Activated naive CD8-positive, alpha-beta T cell treated with anti-CD3 and anti-CD28 coated beads, Interleukin-2, amount 10 ng/mL, durations not matched to agents 7 days and 5 days (primary cell): ENCODE measurements at regions of chr20 and their contacts with region 1.

Region 1: DNA sequence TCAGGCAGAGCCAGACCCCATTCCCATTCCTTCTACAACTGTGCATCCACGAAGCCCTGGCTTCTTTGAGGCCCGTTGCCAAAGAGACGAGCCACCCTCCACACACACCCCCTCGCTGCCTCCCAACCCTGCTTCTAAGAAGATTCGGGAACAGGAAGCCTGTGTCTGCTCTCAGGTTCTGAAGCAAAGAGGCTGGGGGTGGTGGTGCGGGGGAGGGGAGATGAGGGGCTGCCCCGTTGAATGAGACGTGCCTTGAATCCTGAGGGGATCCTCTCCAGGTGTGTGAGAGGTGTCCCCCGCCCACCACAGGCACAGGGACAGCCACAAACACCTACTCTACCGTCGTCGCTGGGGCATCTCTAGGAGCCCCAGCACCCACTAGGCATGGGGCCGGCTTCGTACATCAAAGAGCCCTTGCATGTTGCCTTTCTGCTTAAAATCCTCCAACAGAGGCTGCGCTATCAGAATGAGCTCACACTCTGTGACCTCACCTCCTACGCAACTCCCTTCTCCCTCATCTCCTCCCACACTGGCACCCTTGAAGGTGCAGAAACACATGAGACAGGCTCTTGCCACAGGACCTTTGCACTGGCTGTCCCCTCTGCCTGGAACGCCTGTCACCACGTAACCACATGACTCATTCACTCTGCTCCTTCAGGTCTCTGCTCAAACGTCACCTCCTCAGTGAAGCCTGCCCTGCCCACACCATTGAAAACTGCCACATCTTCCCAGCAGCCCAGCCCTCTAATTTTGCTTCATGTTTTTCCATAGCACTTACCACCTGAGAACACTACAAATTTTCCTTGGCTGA is 58.5 kb downstream of the PREX1 start:
- DNase-seq: peak; percentile 77
- ATAC-seq: peak; percentile 89
- H3K4me3 Mint-ChIP-seq: peak overlapping the region; percentile 66
- H3K27ac Mint-ChIP-seq: peak overlapping the region; percentile 95
- H3K4me1 Mint-ChIP-seq: peaks cover 77% of the 10 kb centered on the region
- H3K27me3 Mint-ChIP-seq: no peaks in the 10 kb centered on the region

Region 2: GRCh38 chr20:48750947-48751635 is 18.2 kb before region 1 on chr20:
- POLR2A ChIA-PET with region 1: interaction called, 10 read pairs
- DNase-seq: peak; percentile 60
- ATAC-seq: peak; percentile 87
- H3K4me3 Mint-ChIP-seq: peak overlapping the region; percentile 75
- H3K27ac Mint-ChIP-seq: peak overlapping the region; percentile 91
- H3K4me1 Mint-ChIP-seq: peaks cover 60% of the 10 kb centered on the region
- H3K27me3 Mint-ChIP-seq: no peaks in the 10 kb centered on the region

Region 3: GRCh38 chr20:48853591-48854443 is 84.5 kb after region 1 on chr20:
- POLR2A ChIA-PET with region 1: no interaction called
- DNase-seq: no peak
- ATAC-seq: no peak
- H3K4me3 Mint-ChIP-seq: no peak overlapping the region
- H3K27ac Mint-ChIP-seq: no peak overlapping the region
- H3K4me1 Mint-ChIP-seq: no peaks in the 10 kb centered on the region
- H3K27me3 Mint-ChIP-seq: peaks cover 3% of the 10 kb centered on the region